Activated CD4-positive, alpha-beta T cell treated with anti-CD3 and anti-CD28 coated beads, Interleukin-2, amount 10 ng/mL, durations not matched to agents 7 days and 5 days (primary cell): ENCODE measurements at regions of chr1 and their contacts with region 1.

Region 1: DNA sequence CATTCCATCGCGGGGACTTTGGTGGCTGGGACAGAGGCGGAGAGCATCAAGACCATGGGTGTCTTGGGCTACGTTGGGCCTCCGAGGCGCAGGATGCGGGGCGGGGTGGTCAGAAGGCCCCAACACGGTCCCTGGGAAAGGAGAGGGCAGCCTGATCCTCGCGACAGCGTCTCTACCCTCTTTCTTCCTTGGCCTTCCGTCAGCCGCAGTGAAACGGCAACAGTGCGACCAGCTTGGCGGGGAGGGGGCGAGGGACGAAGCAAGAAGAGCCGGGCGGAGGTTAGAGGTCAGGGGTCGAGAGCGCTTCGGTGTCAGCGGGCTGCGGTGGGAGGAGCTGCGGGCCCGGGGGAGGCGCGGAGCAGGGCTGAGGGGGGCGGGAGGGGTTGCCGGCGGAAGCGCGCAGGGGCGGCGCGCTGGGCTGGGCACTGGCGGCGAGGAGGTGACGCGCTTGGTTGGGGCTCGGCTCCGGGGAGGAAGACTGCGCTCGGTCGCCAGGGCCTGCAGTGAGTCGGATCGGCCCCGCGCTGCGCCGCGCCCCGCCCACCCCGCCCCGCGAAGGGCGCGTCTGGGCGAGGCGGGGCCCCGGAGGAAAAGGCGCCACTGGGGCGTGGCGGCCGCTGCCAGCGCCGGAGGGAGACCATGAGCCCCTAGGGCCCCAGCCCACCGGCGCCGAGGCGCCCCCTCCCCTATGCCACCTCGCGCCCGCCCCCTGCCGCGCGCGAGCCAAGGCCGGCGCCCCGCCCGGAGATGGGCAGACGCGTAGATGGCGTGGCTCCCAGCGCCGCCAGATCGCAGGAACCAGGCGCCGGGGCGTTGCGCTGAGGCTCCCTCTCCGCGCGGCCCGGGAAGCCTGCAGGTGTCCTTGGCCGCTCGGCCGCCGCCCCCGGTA is at the start of gene KCNC4:
- DNase-seq: peak; percentile 93
- H3K4me3 Mint-ChIP-seq: peak within 1 kb of the TSS; percentile 84
- H3K27ac Mint-ChIP-seq: peak within 1 kb of the TSS; percentile 96
- H3K4me1 Mint-ChIP-seq: peaks cover 46% of the 10 kb centered on the region
- H3K27me3 Mint-ChIP-seq: peaks cover 11% of the 10 kb centered on the region
- total RNA-seq, gene KCNC4: 7.1 to 8.2 TPM

Region 2: GRCh38 chr1:110196917-110197765 is 12.8 kb before region 1 on chr1:
- CTCF ChIA-PET with region 1: interaction called, 20 read pairs
- POLR2A ChIA-PET with region 1: no interaction called
- DNase-seq: peak; percentile 75
- H3K4me3 Mint-ChIP-seq: no peak overlapping the region
- H3K27ac Mint-ChIP-seq: no peak overlapping the region
- H3K4me1 Mint-ChIP-seq: no peaks in the 10 kb centered on the region
- H3K27me3 Mint-ChIP-seq: no peaks in the 10 kb centered on the region

Region 3: DNA sequence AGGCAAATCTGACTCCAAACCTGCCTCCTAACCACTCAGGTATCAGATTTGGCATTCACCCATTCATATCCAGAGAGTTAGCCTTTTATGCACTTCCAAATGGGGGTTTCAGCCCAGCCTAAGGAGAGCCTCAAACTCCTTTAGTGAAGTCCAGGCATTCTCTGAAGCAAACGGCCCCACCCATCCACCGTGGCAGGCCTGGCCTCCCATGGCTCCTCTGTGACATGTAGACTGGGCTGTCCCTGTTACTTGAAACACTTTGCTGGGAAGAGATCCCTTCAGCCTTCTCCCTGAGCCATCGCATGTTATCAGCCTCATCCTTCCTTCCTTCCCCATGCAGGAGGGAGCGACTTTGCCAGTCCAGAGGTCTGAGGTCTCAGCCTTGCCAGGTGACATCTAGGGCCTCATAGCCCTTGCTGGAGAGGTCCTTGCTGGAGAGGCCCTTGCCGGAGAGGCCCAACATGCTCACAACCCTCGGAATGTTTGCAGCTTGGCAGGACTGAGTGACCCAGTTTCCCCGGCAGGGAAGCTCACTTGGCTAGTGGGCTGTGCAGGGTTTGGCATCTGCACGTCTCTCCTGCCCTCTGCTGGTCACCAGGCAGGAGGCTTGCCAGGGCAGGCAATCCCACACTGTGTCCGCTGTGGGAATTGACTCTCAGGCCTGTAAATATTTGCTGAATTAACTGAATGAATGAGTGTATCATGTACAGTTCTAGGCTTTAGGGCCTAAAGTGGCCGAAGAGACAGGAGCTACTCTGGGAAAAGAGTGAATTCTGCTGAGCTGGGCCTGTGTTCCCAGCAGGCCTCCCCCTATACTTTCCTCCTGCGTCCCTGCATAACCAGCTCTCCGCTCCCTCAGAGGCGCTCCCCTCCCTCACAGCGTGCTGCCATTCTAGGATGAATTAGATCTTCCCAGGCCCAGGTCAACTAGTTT is 102.5 kb after region 1 on chr1:
- CTCF ChIA-PET with region 1: interaction called, 73 read pairs
- POLR2A ChIA-PET with region 1: no interaction called
- DNase-seq: peak; percentile 74
- H3K4me3 Mint-ChIP-seq: no peak overlapping the region
- H3K27ac Mint-ChIP-seq: no peak overlapping the region
- H3K4me1 Mint-ChIP-seq: no peaks in the 10 kb centered on the region
- H3K27me3 Mint-ChIP-seq: no peaks in the 10 kb centered on the region

Region 4: GRCh38 chr1:110338886-110339406 is 129.0 kb after region 1 on chr1 and contains the start of gene RBM15:
- CTCF ChIA-PET with region 1: interaction called, 43 read pairs
- POLR2A ChIA-PET with region 1: interaction called, 3 read pairs
- DNase-seq: peak; percentile 99
- H3K4me3 Mint-ChIP-seq: no peak within 1 kb of the TSS
- H3K27ac Mint-ChIP-seq: no peak within 1 kb of the TSS
- H3K4me1 Mint-ChIP-seq: peaks cover 59% of the 10 kb centered on the region
- H3K27me3 Mint-ChIP-seq: no peaks in the 10 kb centered on the region
- total RNA-seq, gene RBM15: 69.9 to 71.2 TPM

Region 5: GRCh38 chr1:110495926-110496600 is 286.1 kb after region 1 on chr1:
- CTCF ChIA-PET with region 1: interaction called, 48 read pairs
- POLR2A ChIA-PET with region 1: no interaction called
- DNase-seq: peak; percentile 86
- H3K4me3 Mint-ChIP-seq: no peak overlapping the region
- H3K27ac Mint-ChIP-seq: no peak overlapping the region
- H3K4me1 Mint-ChIP-seq: peaks cover 4% of the 10 kb centered on the region
- H3K27me3 Mint-ChIP-seq: no peaks in the 10 kb centered on the region